ENCODE measurements at regions of chr2 and their contacts with region 1.

Region 1: DNA sequence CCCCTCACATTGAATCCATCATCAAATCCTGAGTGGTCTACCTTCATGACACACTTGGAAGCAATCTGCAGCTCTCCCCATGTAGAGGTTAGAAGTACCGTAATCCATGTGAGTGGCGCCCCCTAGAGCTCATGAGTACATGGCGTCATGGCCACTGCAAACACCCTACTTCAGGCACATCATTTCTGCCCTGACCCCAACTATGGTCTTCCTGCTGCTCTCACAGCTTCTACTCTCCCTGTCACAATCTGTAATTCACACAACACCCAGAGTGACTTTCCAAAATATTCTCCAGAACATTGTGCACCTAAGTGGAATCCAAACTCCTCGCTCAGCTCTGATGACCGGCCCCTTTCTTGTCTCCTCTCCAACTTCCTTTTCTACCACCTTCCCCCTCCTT is 141.9 kb downstream of the ANKRD44 start:
- DNase-seq: peak in 1 of 2 experiments; percentile 87
- H3K4me3 ChIP-seq: no peak overlapping the region
- H3K27ac ChIP-seq: no peak overlapping the region
- H3K4me1 ChIP-seq: peaks cover 3 to 10% (median 8%) of the 10 kb centered on the region in 4 experiments; a peak in 4 of 7 replicates
- H3K27me3 ChIP-seq: 0 out of 7 replicates have a peak, but pooled peaks cover 0 to 4% (median 0%) of the 10 kb centered on the region in 4 experiments
- CTCF ChIP-seq: peak; percentile 84 to 96 (median 96)
- EP300 ChIP-seq: no peak
- POLR2A ChIP-seq: no peak
- RAD21 ChIP-seq: peak; percentile 90 to 92

Region 2: GRCh38 chr2:197075759-197076337 is 92.9 kb before region 1 on chr2:
- CTCF ChIA-PET with region 1: interaction called, 26 read pairs
- POLR2A ChIA-PET with region 1: no interaction called
- DNase-seq: no peak
- H3K4me3 ChIP-seq: no peak overlapping the region
- H3K27ac ChIP-seq: no peak overlapping the region
- H3K4me1 ChIP-seq: no peaks in the 10 kb centered on the region; a peak in 1 of 7 replicates
- H3K27me3 ChIP-seq: no peaks in the 10 kb centered on the region
- CTCF ChIP-seq: peak; percentile 20 to 54 (median 52)
- EP300 ChIP-seq: no peak
- POLR2A ChIP-seq: no peak
- RAD21 ChIP-seq: peak; percentile 74 to 80

Region 3: DNA sequence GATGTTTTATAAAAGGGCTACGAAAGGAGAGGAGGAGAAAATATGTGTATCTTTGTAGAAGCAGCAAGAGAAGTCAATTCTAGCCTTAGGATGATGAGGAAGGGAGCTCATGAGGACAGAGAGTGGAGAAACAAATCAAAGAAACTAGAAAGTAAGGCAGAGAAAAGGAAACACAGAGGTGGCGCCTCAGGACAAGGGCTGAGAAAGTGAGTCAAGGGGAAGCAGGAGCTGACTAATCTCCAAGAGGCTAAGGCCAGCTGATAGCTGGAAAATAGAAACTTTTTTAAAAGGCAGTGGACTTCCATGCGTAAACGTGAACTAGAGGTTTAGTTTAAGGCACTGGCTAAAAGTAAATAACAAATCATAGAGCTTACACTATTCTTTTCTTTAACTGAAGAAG is 31.5 kb before region 1 on chr2:
- CTCF ChIA-PET with region 1: interaction called, 35 read pairs
- POLR2A ChIA-PET with region 1: interaction called, 3 read pairs
- DNase-seq: no peak
- H3K4me3 ChIP-seq: no peak overlapping the region
- H3K27ac ChIP-seq: no peak overlapping the region
- H3K4me1 ChIP-seq: 0 out of 7 replicates have a peak, but pooled peaks cover 0 to 3% (median 0%) of the 10 kb centered on the region in 4 experiments
- H3K27me3 ChIP-seq: no peaks in the 10 kb centered on the region
- CTCF ChIP-seq: no peak
- EP300 ChIP-seq: no peak
- POLR2A ChIP-seq: no peak
- RAD21 ChIP-seq: no peak

Region 4: DNA sequence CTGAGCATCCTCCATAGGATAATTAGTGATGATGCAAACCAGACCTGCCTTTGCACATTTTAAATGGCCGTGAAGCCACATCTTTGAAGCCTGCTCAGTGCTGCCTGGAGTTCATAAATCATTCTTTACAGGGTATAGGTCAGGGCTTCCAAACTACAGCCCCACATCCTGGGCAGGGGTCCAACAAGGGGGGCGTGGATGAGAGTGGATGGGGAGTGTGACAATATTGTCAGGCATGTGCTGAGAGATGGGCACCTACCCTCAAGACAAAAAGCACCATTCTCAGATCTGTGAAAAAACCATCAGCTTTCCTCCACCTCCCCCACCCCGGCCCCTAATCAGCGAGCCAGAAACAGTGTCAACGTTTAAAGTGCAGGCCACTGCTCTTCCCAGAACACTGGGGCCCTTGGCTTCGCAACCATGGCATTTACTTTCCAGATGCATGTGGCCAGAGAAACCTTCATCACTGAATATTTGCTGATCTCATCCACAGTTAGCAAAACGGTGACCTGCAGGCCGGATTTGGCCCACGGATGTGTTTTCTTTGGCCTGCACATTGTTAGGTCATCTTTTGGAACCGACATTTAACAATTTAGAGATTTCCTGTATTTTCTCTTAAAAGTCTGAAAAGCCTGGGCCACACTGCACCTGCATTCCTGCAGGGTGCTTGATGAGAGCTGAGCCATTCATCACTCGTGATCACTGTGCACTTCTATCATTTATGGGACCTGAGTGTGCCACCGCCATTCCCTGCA is 11.2 kb after region 1 on chr2:
- CTCF ChIA-PET with region 1: interaction called, 32 read pairs
- POLR2A ChIA-PET with region 1: no interaction called
- DNase-seq: no peak
- H3K4me3 ChIP-seq: no peak overlapping the region
- H3K27ac ChIP-seq: no peak overlapping the region
- H3K4me1 ChIP-seq: no peaks in the 10 kb centered on the region
- H3K27me3 ChIP-seq: no peaks in the 10 kb centered on the region
- CTCF ChIP-seq: no peak
- EP300 ChIP-seq: no peak
- POLR2A ChIP-seq: no peak
- RAD21 ChIP-seq: no peak

Region 5: DNA sequence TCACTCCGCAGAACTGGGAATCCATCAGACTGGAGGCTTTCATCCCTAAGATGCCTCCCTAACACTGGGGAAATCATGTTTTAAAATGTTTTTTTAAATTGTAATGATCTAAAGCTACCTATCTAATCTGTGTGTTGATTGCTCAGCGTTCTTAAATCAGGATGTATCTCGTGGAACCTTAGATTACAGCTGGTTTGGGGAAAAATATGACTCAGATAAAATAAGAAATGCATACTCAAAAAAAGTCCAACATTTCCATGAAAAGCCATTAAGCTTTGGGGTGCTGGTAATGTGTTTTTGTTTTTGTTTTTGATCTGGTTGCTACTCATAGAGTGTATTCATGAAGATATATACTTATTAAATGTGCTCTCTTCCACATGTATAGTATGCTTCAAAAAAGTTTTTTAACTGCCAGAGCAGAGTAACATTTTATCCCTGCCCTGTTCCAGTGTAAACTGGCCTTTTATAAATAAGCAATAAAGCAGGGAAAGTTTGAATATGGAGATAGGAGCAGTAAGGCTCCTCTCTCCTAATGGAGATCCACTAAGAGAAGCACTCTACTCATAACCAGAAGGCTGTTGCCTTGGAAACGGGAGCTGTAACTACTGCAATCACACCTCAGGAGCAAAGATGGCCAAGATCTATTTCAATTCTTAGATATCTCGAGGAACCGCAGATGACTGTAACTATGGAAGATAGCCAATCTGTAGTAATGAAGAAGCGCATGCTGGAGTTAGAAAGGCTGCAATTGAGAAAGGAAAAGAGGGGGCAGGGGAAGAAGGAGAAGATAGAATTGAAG is 100.3 kb after region 1 on chr2:
- CTCF ChIA-PET with region 1: no interaction called
- POLR2A ChIA-PET with region 1: no interaction called
- DNase-seq: no peak
- H3K4me3 ChIP-seq: no peak overlapping the region
- H3K27ac ChIP-seq: no peak overlapping the region
- H3K4me1 ChIP-seq: no peaks in the 10 kb centered on the region
- H3K27me3 ChIP-seq: no peaks in the 10 kb centered on the region
- CTCF ChIP-seq: no peak
- EP300 ChIP-seq: no peak
- POLR2A ChIP-seq: no peak
- RAD21 ChIP-seq: no peak

Region 6: DNA sequence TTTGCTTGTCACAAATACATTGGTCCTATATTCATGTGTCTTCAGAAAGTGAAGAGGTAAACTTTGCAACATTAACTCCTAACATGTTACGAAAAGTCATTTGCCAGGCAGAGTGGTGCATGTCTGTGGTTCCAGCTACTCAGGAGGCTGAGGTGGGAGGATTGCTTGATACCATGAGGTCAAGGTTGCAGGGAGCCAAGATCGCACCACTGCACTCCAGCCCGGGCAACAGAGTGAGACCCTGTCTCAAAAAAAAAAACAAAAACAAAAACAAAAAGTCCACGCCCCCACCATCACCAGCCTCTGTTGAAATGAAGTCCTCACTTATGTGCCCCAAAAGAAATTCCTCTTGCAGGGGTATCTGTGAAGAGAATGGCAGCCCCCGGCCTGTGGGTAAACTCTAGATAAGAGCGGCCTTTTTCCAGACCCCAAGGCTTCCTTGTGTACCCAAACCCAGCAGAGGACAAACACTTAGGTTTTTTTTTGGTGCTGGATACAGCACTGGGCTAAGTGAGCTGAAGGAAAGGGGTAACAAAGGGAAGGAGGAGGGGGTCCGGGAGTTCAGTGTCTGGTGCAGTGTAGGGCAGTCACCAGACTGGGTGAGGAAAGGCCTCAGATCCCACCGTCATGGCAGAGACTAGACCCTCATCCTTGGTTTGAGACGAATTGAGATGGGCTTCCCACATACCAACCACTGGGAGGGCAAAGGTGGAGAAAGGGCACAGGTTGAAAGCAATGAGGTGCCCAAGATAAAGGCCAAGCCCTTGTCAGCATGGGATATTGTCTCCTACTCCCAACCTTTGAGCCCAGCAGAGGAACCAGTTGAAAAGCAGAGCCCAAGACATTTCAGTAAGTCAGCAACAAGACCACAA is 311.7 kb after region 1 on chr2:
- CTCF ChIA-PET with region 1: no interaction called
- POLR2A ChIA-PET with region 1: no interaction called
- DNase-seq: no peak
- H3K4me3 ChIP-seq: no peak overlapping the region
- H3K27ac ChIP-seq: no peak overlapping the region
- H3K4me1 ChIP-seq: no peaks in the 10 kb centered on the region
- H3K27me3 ChIP-seq: no peaks in the 10 kb centered on the region
- CTCF ChIP-seq: no peak
- EP300 ChIP-seq: no peak
- POLR2A ChIP-seq: no peak
- RAD21 ChIP-seq: no peak